AG04450 (cell line): ENCODE measurements at regions of chr16 and their contacts with region 1.

Region 1: GRCh38 chr16:85717393-85718121 is 28.8 kb upstream of the GINS2 start:
- DNase-seq: no peak
- H3K4me3 ChIP-seq: no peak overlapping the region
- H3K27ac ChIP-seq: no peak overlapping the region
- H3K27me3 ChIP-seq: no peaks in the 10 kb centered on the region
- CTCF ChIP-seq: peak; percentile 65

Region 2: DNA sequence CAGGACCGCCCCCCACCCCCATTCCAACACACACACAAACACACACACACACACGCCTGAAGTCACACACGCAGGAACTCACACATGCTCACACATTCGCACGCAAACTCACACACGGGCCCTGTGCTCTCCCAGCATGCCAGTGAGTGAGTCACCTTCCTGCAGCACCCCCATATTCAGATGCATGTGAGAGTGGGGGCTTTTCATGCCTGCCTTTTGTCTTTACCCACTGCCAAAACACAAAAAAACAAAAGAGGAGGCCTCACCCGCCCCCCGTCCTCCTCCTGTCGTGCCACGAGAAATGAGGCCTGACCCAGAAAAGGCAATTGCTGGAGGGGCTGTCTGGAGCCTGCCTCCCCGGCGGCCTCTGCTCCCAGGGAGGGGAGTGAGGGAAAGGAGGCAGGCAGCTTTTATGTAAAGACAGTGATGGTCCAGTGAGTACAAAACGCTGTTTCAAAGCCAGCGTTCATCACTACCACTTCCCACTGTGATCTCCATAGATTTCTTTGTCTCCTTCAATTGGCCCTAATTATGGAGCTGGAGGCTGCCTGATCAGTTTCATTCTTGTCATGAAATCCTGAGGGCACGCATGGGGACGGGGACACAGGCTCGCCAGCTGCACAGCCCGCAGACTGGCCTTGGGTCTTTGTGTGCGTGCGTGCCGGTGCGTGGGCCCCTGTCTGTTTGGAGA is 133.9 kb before region 1 on chr16:
- CTCF ChIA-PET with region 1: no interaction called
- POLR2A ChIA-PET with region 1: no interaction called
- DNase-seq: peak; percentile 56
- H3K4me3 ChIP-seq: no peak overlapping the region
- H3K27ac ChIP-seq: peak overlapping the region; percentile 73
- H3K27me3 ChIP-seq: no peaks in the 10 kb centered on the region
- CTCF ChIP-seq: no peak

Region 3: GRCh38 chr16:85639536-85640253 is 77.9 kb before region 1 on chr16:
- CTCF ChIA-PET with region 1: no interaction called
- POLR2A ChIA-PET with region 1: no interaction called
- DNase-seq: no peak
- H3K4me3 ChIP-seq: no peak overlapping the region
- H3K27ac ChIP-seq: no peak overlapping the region
- H3K27me3 ChIP-seq: no peaks in the 10 kb centered on the region
- CTCF ChIP-seq: no peak

Region 4: DNA sequence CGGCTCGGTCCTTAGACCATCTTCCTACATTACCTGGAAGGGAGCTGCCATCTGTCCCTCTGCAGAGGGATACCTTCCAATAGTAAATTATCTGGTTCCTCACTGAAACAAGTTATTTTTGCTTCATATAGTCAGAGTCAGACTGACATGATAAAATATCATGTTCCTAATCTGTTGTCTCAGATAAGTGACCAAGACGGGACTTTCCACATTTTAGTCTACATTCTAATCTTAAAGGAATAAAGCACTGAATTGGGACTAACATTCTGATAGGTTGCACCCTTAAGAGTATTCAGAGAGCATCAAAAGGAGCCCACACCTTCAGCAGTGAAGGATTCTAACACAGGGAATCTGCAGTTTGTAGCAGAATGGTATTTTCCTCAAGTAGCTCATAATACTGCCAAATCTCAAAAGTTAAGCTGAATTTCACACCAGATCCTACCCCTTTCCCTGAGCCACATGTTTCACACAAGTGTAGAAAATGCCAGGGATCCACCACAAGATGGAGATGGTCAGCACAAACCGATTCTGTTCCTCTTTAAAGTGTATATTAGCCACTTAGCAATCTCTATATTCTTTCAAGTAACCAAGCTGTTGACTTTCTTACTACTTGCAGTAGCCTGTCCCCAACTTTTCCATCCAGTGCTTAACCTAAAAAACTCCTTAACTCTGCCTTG is 42.2 kb before region 1 on chr16:
- CTCF ChIA-PET with region 1: interaction called, 10 read pairs
- POLR2A ChIA-PET with region 1: no interaction called
- DNase-seq: no peak
- H3K4me3 ChIP-seq: no peak overlapping the region
- H3K27ac ChIP-seq: no peak overlapping the region
- H3K27me3 ChIP-seq: no peaks in the 10 kb centered on the region
- CTCF ChIP-seq: peak; percentile 65

Region 5: GRCh38 chr16:85738923-85739695 is 21.6 kb after region 1 on chr16:
- CTCF ChIA-PET with region 1: interaction called, 12 read pairs
- POLR2A ChIA-PET with region 1: no interaction called
- DNase-seq: no peak
- H3K4me3 ChIP-seq: no peak overlapping the region
- H3K27ac ChIP-seq: no peak overlapping the region
- H3K27me3 ChIP-seq: no peaks in the 10 kb centered on the region
- CTCF ChIP-seq: no peak